CD14-positive monocyte (primary cell): ENCODE measurements at regions of chr20 and their contacts with region 1.

Region 1: DNA sequence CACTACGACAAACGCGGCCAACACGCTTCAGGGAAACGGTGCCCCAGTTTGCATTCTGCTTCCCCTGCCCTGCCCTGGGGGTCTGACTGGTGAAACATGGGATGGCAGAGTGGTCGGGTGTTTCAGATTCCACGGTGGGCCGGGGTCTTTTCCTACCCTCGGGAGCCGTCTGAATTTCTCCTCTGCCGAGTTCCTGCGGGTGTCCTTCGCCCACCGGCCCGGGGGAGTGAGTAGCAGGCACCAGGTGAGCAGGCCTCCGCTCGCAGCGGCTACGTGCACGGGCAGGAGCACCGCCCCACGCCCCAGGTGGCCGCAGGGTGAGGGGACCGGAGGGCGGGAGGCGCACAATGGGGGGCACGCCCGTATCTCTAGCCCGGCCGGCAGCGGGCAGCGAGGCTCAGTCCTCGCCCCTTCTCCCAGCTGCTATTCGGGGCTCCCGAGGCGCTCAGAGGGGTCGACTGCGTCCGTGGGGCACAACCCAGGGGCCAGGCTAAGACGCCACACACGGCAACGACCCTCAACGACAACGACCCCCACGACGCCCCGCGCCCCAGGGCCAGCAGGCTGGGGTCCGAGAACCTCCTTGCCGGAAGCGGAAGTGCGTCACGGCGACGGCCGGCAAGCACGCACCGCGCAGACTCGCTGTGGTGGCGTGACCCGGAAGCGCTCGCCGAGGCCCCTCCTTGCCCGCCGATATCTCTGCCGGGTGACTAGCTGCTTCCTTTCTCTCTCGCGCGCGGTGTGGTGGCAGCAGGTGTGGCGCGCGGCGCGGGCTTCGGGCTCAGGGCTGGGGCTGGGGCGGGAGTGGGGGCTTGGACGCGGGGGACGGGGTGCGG is at the start of gene RPS21:
- DNase-seq: peak; percentile 90 to 92 (median 90)
- H3K4me3 ChIP-seq: peak within 1 kb of the TSS; percentile 84 to 96 (median 84)
- H3K4me3 Mint-ChIP-seq: peak within 1 kb of the TSS; percentile 89 to 91
- H3K27ac ChIP-seq: peak within 1 kb of the TSS; percentile 57 to 96
- H3K27ac Mint-ChIP-seq: peak within 1 kb of the TSS; percentile 85 to 96 (median 91)
- H3K4me1 ChIP-seq: peaks cover 19 to 25% of the 10 kb centered on the region in 2 donors
- H3K4me1 Mint-ChIP-seq: peaks cover 30% of the 10 kb centered on the region
- H3K27me3 ChIP-seq: no peaks in the 10 kb centered on the region
- H3K27me3 Mint-ChIP-seq: no peaks in the 10 kb centered on the region
- CTCF ChIP-seq: no peak
- polyA plus RNA-seq, gene RPS21: 799 to 6,263 (median 968) TPM

Region 2: DNA sequence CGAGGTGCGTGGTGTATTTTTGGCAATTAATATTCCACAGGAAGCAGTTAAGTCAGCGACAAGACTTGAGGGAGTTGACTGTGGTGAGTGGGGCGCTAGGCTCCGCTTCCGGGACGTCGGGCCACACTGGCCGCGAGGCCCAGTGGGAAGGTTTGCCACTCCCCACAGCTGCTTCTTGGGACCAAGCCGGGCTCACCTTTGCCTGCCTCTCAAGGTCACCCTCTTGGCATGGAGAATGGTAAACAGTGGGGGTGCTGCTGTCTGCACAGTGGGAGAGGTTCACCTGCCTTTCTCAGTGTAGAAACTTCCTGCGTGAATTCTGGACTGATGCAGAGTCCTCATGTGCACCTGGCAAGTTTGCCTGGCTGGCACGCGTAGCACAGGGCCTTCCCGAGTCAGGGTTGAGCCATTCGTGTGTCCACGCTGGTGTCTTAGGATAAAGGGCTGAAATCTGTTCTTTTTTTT is 141.9 kb before region 1 on chr20:
- intact Hi-C with region 1: loop called in 1 of 2 experiments (anchors 5 kb)
- DNase-seq: no peak
- H3K4me3 ChIP-seq: no peak overlapping the region
- H3K4me3 Mint-ChIP-seq: no peak overlapping the region
- H3K27ac ChIP-seq: no peak overlapping the region
- H3K27ac Mint-ChIP-seq: no peak overlapping the region
- H3K4me1 ChIP-seq: peaks cover 15 to 21% of the 10 kb centered on the region in 2 donors
- H3K4me1 Mint-ChIP-seq: peaks cover 36% of the 10 kb centered on the region
- H3K27me3 ChIP-seq: no peaks in the 10 kb centered on the region
- H3K27me3 Mint-ChIP-seq: peaks cover 0 to 4% (median 0%) of the 10 kb centered on the region in 3 donors
- CTCF ChIP-seq: no peak

Region 3: DNA sequence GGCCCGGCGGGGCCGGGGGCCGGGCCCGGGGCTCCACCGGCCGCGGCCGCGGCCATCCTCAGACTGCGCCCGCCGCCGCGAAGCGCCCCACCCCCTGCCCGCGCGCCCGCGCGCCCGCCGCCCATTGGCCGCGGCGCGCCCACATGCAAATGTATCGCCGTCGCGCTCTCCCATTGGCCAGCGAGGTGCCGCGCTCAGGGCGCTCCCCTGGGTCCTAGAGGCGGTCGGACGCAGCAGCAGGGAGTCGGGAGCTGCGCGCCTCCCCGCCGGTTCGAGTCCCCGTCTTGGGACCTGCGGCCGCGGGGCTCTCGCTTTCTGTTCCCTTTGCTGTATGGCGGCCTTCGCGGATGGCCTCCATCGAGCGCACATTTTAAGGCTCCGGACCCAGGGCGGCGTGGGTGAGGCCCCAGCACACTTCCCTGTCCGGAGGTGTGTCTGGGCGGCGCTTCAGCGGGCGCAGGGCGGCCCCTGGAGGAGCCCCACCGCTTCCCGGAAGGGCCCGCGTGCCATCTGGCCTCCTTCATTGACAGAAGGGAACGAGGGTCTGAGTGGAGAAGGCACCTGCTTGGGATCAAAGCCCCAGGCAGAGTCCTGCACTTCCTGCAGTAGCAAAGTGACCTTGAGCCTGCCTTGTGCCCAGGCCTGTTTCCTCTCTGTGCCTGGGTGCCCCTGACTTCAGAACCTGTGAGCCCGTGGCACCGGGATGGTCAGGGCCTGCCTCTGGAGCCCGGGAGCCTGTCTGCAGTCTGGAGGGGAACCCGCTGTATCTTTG is 20.8 kb after region 1 on chr20 and contains the start of gene CABLES2:
- intact Hi-C with region 1: loop called in 1 of 2 experiments (anchors 2 kb)
- DNase-seq: peak; percentile 89 to 92 (median 90)
- H3K4me3 ChIP-seq: peak within 1 kb of the TSS; percentile 52 to 79 (median 54)
- H3K4me3 Mint-ChIP-seq: peak within 1 kb of the TSS; percentile 82 to 89
- H3K27ac ChIP-seq: peak within 1 kb of the TSS; percentile 6 to 74
- H3K27ac Mint-ChIP-seq: peak within 1 kb of the TSS in 6 of 7 donors; percentile 74 to 86 (median 81)
- H3K4me1 ChIP-seq: peaks cover 30 to 41% of the 10 kb centered on the region in 2 donors
- H3K4me1 Mint-ChIP-seq: peaks cover 34% of the 10 kb centered on the region
- H3K27me3 ChIP-seq: peaks cover 0 to 3% of the 10 kb centered on the region in 2 donors
- H3K27me3 Mint-ChIP-seq: peaks cover 12 to 17% (median 13%) of the 10 kb centered on the region in 3 donors
- CTCF ChIP-seq: no peak
- polyA plus RNA-seq, gene CABLES2: 0.60 to 4.0 (median 0.61) TPM